ENCODE measurements at regions of chr3 and their contacts with region 1.

Region 1: GRCh38 chr3:174243171-174243570 is 616.0 kb upstream of the NAALADL2 start:
- DNase-seq: no peak
- H3K4me3 Mint-ChIP-seq: no peak overlapping the region
- H3K27ac Mint-ChIP-seq: no peak overlapping the region
- H3K4me1 Mint-ChIP-seq: no peaks in the 10 kb centered on the region
- H3K27me3 Mint-ChIP-seq: no peaks in the 10 kb centered on the region

Region 2: GRCh38 chr3:173857154-173857553 is 386.0 kb before region 1 on chr3:
- CTCF ChIA-PET with region 1: no interaction called
- intact Hi-C with region 1: no loop called
- DNase-seq: no peak
- H3K4me3 Mint-ChIP-seq: no peak overlapping the region
- H3K27ac Mint-ChIP-seq: no peak overlapping the region
- H3K4me1 Mint-ChIP-seq: no peaks in the 10 kb centered on the region
- H3K27me3 Mint-ChIP-seq: no peaks in the 10 kb centered on the region

Region 3: DNA sequence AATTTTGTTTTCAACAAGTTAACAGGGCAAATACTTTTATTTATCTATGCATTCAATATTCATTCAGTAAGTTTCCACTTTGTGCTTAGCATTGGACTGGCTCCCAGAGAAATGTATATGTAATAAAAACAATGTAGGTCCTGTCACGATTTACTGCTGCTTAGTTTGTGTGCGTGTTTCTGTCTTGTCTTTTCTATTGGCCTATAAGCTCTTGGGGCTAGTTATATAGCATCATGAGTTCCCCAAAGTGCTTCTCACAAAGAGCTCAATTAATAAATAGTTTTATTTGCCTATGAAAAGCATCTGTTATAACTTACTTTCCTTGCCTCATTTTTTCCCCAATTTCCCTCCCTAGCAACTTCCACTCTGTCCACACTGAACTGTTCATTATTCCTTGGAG is 50.7 kb before region 1 on chr3:
- CTCF ChIA-PET with region 1: no interaction called
- intact Hi-C with region 1: loop called (anchors 1 kb)
- DNase-seq: no peak
- H3K4me3 Mint-ChIP-seq: no peak overlapping the region
- H3K27ac Mint-ChIP-seq: no peak overlapping the region
- H3K4me1 Mint-ChIP-seq: no peaks in the 10 kb centered on the region
- H3K27me3 Mint-ChIP-seq: no peaks in the 10 kb centered on the region

Measured in activated naive CD4-positive, alpha-beta T cell treated with anti-CD3 and anti-CD28 coated beads for 36 hours (primary cell).